H1 (cell line): ENCODE measurements at regions of chr7 and their contacts with region 1.

Region 1: DNA sequence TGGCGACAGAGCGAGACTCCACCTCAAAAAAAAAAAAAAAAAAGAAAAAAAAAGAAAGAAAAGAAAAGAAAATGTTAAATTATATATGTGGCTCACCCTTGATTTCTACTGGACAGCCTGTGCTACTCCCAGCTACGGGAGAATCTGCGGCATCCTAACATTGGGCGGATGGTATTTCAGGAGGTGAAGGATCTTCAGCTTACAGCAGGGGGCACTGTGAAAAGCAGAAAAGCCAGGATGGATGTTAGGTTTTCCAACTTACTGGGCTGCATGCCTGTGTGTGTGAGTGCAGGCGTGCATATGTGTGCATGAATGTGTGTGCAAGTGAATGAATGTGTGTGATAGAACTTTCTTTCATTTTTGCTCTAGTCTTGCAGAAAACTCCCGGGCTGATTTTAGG is 1066.5 kb downstream of the TYW1 start:
- DNase-seq: peak in 1 of 2 experiments; percentile 53
- H3K4me3 ChIP-seq: no peak overlapping the region
- H3K27ac ChIP-seq: no peak overlapping the region
- H3K4me1 ChIP-seq: peaks cover 0 to 4% (median 3%) of the 10 kb centered on the region in 4 experiments; a peak in 3 of 7 replicates
- H3K27me3 ChIP-seq: no peaks in the 10 kb centered on the region
- CTCF ChIP-seq: peak; percentile 44 to 82 (median 48)
- EP300 ChIP-seq: no peak
- POLR2A ChIP-seq: no peak
- RAD21 ChIP-seq: peak; percentile 62 to 72

Region 2: GRCh38 chr7:67813621-67814292 is 249.4 kb before region 1 on chr7:
- CTCF ChIA-PET with region 1: no interaction called
- POLR2A ChIA-PET with region 1: no interaction called
- DNase-seq: no peak
- H3K4me3 ChIP-seq: no peak overlapping the region
- H3K27ac ChIP-seq: no peak overlapping the region
- H3K4me1 ChIP-seq: no peaks in the 10 kb centered on the region
- H3K27me3 ChIP-seq: no peaks in the 10 kb centered on the region
- CTCF ChIP-seq: no peak
- EP300 ChIP-seq: no peak
- POLR2A ChIP-seq: no peak
- RAD21 ChIP-seq: no peak

Region 3: DNA sequence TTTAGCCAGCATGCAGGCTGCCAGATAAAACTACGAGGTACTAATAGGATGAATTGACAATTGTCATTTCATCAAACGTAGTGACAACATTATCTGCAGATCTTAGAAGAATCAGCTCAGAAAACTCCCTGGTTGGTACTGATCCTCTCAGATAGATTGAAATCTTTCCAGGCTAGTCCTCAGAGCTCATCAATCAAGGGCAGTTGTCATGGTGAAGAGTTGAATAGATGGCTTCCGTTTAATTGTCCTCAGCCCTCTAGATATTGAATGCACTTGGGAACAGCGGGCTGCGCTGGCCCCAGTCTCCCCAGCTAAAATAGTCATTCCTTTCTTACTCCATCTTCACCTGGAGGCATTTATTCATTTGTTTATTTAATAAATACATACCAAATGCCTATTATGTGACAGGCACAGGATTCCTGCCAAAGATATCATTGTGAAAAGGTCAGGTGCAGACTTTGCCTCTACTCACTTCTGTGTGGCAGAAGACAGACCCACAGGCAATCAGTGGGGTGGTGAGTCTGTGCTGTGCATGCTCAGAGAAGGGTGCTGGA is 15.1 kb after region 1 on chr7:
- CTCF ChIA-PET with region 1: interaction called, 14 read pairs
- POLR2A ChIA-PET with region 1: no interaction called
- DNase-seq: no peak
- H3K4me3 ChIP-seq: no peak overlapping the region
- H3K27ac ChIP-seq: no peak overlapping the region
- H3K4me1 ChIP-seq: no peaks in the 10 kb centered on the region
- H3K27me3 ChIP-seq: no peaks in the 10 kb centered on the region
- CTCF ChIP-seq: no peak
- EP300 ChIP-seq: no peak
- POLR2A ChIP-seq: no peak
- RAD21 ChIP-seq: no peak